ENCODE measurements at regions of chr3 and their contacts with region 1.

Region 1: GRCh38 chr3:42101048-42101447 is 9.9 kb downstream of the TRAK1 start:
- DNase-seq: no peak
- H3K4me3 ChIP-seq: no peak overlapping the region
- H3K4me3 Mint-ChIP-seq: no peak overlapping the region
- H3K27ac ChIP-seq: no peak overlapping the region
- H3K27ac Mint-ChIP-seq: no peak overlapping the region
- H3K4me1 ChIP-seq: no peaks in the 10 kb centered on the region
- H3K4me1 Mint-ChIP-seq: peaks cover 0 to 3% (median 2%) of the 10 kb centered on the region in 4 donors
- H3K27me3 ChIP-seq: no peaks in the 10 kb centered on the region
- H3K27me3 Mint-ChIP-seq: no peaks in the 10 kb centered on the region

Region 2: DNA sequence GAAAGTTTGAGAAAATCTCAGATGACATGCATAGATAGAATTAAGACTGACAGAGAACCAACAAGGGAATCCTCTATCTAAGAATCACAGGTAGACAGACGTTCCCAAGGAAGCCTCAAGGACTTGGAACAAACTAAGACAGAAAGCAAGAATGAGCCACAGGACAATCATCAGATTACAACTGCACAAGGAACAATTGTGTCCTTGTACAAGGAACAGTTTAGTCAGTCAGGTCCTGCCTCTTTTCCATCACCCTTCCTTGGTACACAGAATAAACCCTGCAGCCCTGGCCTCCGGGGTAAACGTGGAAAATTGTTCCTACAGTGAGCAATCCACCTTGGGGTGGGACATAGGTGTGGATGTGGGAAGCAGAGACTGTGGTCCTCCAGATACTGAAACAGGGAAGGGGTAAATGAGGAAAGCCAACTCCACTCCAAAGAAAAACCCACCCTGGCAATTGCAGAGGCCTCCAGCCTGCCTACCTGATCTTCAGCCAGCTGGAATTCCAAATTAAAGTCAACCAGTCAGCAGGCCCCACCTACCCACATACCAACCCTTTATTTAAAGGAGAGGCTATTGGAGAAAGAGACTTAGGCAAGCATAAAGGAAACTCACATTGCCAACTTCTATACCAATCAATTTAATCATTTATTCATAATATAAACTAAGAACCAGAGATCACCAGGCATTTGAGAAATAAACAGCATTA is 212.5 kb before region 1 on chr3:
- CTCF ChIA-PET with region 1: interaction called, 31 read pairs
- POLR2A ChIA-PET with region 1: no interaction called
- intact Hi-C with region 1: no loop called
- DNase-seq: no peak
- H3K4me3 ChIP-seq: no peak overlapping the region
- H3K4me3 Mint-ChIP-seq: no peak overlapping the region
- H3K27ac ChIP-seq: no peak overlapping the region
- H3K27ac Mint-ChIP-seq: peak overlapping the region in 1 of 7 donors; percentile 19
- H3K4me1 ChIP-seq: no peaks in the 10 kb centered on the region
- H3K4me1 Mint-ChIP-seq: no peaks in the 10 kb centered on the region
- H3K27me3 ChIP-seq: no peaks in the 10 kb centered on the region
- H3K27me3 Mint-ChIP-seq: no peaks in the 10 kb centered on the region

Region 3: DNA sequence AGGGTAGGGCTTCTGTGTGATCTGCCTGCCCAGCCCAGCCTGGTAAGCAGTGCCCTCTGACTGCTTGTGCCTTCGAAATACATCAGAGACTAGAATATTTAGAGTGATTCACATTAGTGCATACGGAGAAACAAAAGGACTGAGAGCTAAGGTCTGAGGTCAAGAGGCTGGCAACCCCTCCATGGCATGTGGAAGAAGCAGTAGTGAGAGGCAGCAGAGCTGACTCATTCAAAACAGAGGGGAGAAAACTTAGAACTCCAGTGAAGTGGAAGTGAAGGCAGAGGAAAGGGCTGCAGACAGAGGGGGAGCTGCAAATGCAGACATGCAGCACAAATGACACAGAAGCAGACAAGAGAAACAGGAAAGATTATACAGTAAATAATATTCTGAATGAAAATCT is 200.8 kb before region 1 on chr3:
- CTCF ChIA-PET with region 1: interaction called, 51 read pairs
- POLR2A ChIA-PET with region 1: no interaction called
- intact Hi-C with region 1: no loop called
- DNase-seq: no peak
- H3K4me3 ChIP-seq: no peak overlapping the region
- H3K4me3 Mint-ChIP-seq: no peak overlapping the region
- H3K27ac ChIP-seq: no peak overlapping the region
- H3K27ac Mint-ChIP-seq: peak overlapping the region in 3 of 7 donors; percentile 5 to 45 (median 22)
- H3K4me1 ChIP-seq: no peaks in the 10 kb centered on the region
- H3K4me1 Mint-ChIP-seq: peaks cover 0 to 2% (median 0%) of the 10 kb centered on the region in 4 donors
- H3K27me3 ChIP-seq: no peaks in the 10 kb centered on the region
- H3K27me3 Mint-ChIP-seq: no peaks in the 10 kb centered on the region

Region 4: GRCh38 chr3:42012935-42013690 is 87.9 kb before region 1 on chr3:
- CTCF ChIA-PET with region 1: interaction called, 16 read pairs
- POLR2A ChIA-PET with region 1: no interaction called
- intact Hi-C with region 1: loop called (anchors 2 kb)
- DNase-seq: peak; percentile 64 to 70 (median 66)
- H3K4me3 ChIP-seq: peak overlapping the region; percentile 50 to 85
- H3K4me3 Mint-ChIP-seq: peak overlapping the region; percentile 87 to 96 (median 92)
- H3K27ac ChIP-seq: peak overlapping the region; percentile 63
- H3K27ac Mint-ChIP-seq: peak overlapping the region; percentile 95 to 98 (median 97)
- H3K4me1 ChIP-seq: peaks cover 32% of the 10 kb centered on the region
- H3K4me1 Mint-ChIP-seq: peaks cover 24 to 45% (median 36%) of the 10 kb centered on the region in 4 donors
- H3K27me3 ChIP-seq: no peaks in the 10 kb centered on the region
- H3K27me3 Mint-ChIP-seq: no peaks in the 10 kb centered on the region

Region 5: DNA sequence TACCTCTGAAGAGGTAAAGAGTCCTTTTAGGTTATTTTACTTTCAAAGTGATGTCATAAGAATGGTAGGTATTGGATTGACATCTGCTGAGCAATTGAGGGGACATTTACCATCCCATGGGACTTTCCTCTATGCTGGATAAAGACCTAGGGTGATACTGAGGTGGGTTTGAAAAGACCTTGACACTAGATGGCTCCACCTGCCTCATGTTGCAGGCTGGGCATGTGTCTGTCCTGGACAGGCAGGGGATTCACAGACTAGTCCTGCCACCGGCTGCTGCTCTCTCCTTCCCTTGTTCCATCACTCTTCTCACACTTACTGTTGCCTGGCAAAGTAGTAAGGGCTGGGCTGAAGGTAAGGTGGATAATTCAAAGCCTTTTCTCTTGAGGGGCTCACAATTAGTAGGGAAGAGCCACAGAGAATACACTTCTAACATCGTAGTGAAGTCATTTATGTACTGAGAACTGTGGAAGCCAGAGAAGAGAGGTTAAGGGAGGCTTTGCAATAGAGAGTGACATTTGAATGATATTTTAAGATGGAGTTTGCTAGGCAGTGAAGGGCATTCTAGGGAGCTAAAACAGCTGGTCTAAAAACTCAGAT is 17.8 kb after region 1 on chr3:
- CTCF ChIA-PET with region 1: interaction called, 22 read pairs
- POLR2A ChIA-PET with region 1: no interaction called
- intact Hi-C with region 1: no loop called
- DNase-seq: no peak
- H3K4me3 ChIP-seq: no peak overlapping the region
- H3K4me3 Mint-ChIP-seq: no peak overlapping the region
- H3K27ac ChIP-seq: no peak overlapping the region
- H3K27ac Mint-ChIP-seq: peak overlapping the region in 3 of 7 donors; percentile 37 to 61 (median 43)
- H3K4me1 ChIP-seq: no peaks in the 10 kb centered on the region
- H3K4me1 Mint-ChIP-seq: peaks cover 13 to 17% (median 16%) of the 10 kb centered on the region in 4 donors
- H3K27me3 ChIP-seq: no peaks in the 10 kb centered on the region
- H3K27me3 Mint-ChIP-seq: no peaks in the 10 kb centered on the region

Measured in CD4-positive, alpha-beta memory T cell (primary cell).